ENCODE measurements at regions of chr7 and their contacts with region 1.

Region 1: GRCh38 chr7:50832744-50833143 is 50.0 kb upstream of the GRB10 start:
- DNase-seq: peak; percentile 47
- H3K4me3 Mint-ChIP-seq: no peak overlapping the region
- H3K27ac Mint-ChIP-seq: peak overlapping the region; percentile 13
- H3K4me1 Mint-ChIP-seq: peaks cover 11% of the 10 kb centered on the region
- H3K27me3 Mint-ChIP-seq: peaks cover 10% of the 10 kb centered on the region

Region 2: GRCh38 chr7:50397320-50397970 is 435.3 kb before region 1 on chr7:
- CTCF ChIA-PET with region 1: no interaction called
- intact Hi-C with region 1: loop called (anchors 1 kb)
- DNase-seq: peak; percentile 60
- H3K4me3 Mint-ChIP-seq: no peak overlapping the region
- H3K27ac Mint-ChIP-seq: peak overlapping the region; percentile 78
- H3K4me1 Mint-ChIP-seq: peaks cover 81% of the 10 kb centered on the region
- H3K27me3 Mint-ChIP-seq: no peaks in the 10 kb centered on the region

Region 3: GRCh38 chr7:50851451-50851850 is 18.7 kb after region 1 on chr7:
- CTCF ChIA-PET with region 1: no interaction called
- intact Hi-C with region 1: no loop called
- DNase-seq: no peak
- H3K4me3 Mint-ChIP-seq: no peak overlapping the region
- H3K27ac Mint-ChIP-seq: no peak overlapping the region
- H3K4me1 Mint-ChIP-seq: no peaks in the 10 kb centered on the region
- H3K27me3 Mint-ChIP-seq: peaks cover 2% of the 10 kb centered on the region